Heart left ventricle (tissue), 16 donors: ENCODE measurements at regions of chr5 and their contacts with region 1.

Region 1: DNA sequence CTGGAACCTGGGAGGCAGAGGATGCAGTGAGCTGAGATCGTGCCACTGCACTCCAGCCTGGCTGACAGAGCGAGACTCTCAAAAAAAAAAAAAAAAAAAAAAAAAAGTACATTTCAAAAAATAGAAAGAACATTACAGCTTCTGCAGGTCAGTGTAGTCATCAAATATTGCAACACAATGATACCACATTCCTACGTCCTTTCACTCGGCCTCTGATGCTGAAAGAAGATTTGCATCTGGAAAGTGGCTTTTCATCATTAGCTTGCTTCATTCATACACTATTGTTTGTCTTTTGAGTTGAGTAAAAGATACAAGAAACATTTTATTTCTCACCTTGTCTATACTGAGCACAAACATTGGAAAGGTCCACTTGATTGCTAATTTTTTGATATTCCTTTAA is 59.6 kb upstream of the CPLANE1 start:
- DNase-seq: no peak
- ATAC-seq: no peak
- H3K4me3 ChIP-seq: no peak overlapping the region
- H3K27ac ChIP-seq: no peak overlapping the region
- H3K4me1 ChIP-seq: no peaks in the 10 kb centered on the region
- H3K27me3 ChIP-seq: no peaks in the 10 kb centered on the region
- CTCF ChIP-seq: no peak
- POLR2A ChIP-seq: no peak

Region 2: GRCh38 chr5:37197340-37198050 is 111.3 kb before region 1 on chr5:
- intact Hi-C with region 1: loop called in 1 of 10 experiments (anchors 10 kb)
- DNase-seq: no peak
- ATAC-seq: peak in 1 of 4 donors; percentile 41
- H3K4me3 ChIP-seq: peak overlapping the region in 7 of 12 donors; percentile 1 to 35 (median 16)
- H3K27ac ChIP-seq: peak overlapping the region in 3 of 12 donors; percentile 30 to 78 (median 31)
- H3K4me1 ChIP-seq: peaks cover 0 to 17% (median 0%) of the 10 kb centered on the region in 12 donors
- H3K27me3 ChIP-seq: no peaks in the 10 kb centered on the region
- CTCF ChIP-seq: no peak
- POLR2A ChIP-seq: no peak

Region 3: GRCh38 chr5:37222176-37222575 is 86.6 kb before region 1 on chr5:
- intact Hi-C with region 1: loop called in 1 of 10 experiments (anchors 10 kb)
- DNase-seq: no peak
- ATAC-seq: no peak
- H3K4me3 ChIP-seq: no peak overlapping the region
- H3K27ac ChIP-seq: no peak overlapping the region
- H3K4me1 ChIP-seq: no peaks in the 10 kb centered on the region
- H3K27me3 ChIP-seq: no peaks in the 10 kb centered on the region
- CTCF ChIP-seq: no peak
- POLR2A ChIP-seq: no peak